IMR-90 (cell line): ENCODE measurements at regions of chr1 and their contacts with region 1.

Region 1: DNA sequence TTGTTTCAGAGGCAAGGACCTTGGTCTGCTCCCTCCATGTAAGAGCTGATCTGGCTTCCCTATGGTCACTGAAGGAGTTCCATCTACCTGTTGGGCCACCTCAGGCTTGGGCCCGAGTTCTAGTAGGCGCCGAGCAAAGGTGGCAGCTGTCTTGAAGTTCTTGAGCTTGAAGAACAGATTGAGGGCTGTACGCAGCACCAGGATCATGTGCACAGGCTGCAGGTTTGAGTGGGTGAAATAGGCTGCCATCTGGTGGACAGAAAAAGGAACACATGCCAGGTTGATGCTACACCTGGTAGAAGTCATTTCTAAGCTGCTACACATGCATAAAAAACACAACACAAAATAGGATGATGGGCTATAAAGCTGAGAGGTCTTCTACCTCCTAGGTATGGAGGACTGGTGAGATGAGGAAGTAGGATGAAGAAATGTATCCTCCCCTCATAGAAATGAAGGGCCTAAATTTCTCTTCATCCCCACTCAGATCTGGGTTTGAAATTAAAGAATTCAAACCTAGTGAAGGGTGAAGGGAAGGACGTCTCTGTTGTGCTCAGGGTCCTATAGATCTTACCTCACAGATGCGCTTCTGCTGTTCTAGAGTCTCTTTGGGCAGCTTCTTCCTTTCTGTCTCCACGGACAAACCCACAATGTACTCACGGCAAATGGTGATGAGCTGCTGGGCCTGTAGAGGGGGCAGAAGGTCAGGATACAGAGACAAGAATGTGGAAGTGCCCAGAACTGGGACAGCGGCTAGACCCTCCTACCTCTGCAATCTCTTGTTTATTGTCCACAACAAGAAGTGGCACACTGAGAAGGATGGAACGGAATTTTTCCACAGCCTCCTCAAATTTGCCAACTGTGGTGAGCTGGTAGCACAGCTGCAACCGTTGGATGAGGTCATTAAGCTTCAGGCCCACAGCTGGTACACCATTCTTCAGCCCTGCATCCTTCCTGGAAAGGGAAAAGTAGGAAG is 6.6 kb upstream of the PEX19 start:
- DNase-seq: peak; percentile 70
- ATAC-seq: peak; percentile 71
- H3K4me3 ChIP-seq: no peak overlapping the region
- H3K27ac ChIP-seq: no peak overlapping the region
- H3K4me1 ChIP-seq: no peaks in the 10 kb centered on the region
- H3K27me3 ChIP-seq: no peaks in the 10 kb centered on the region
- CTCF ChIP-seq: peak; percentile 66
- POLR2A ChIP-seq: no peak
- RAD21 ChIP-seq: peak; percentile 52

Region 2: GRCh38 chr1:160098852-160099561 is 192.5 kb before region 1 on chr1:
- CTCF ChIA-PET with region 1: interaction called, 3 read pairs
- POLR2A ChIA-PET with region 1: no interaction called
- dilution Hi-C with region 1: no loop called
- in situ Hi-C with region 1: no loop called
- intact Hi-C with region 1: loop called (anchors 1 kb)
- DNase-seq: peak; percentile 87
- ATAC-seq: peak; percentile 95
- H3K4me3 ChIP-seq: peak overlapping the region; percentile 64
- H3K27ac ChIP-seq: 0 out of 2 replicates have a peak overlapping the region, but pooled peaks have one; percentile 7
- H3K4me1 ChIP-seq: peaks cover 16% of the 10 kb centered on the region
- H3K27me3 ChIP-seq: no peaks in the 10 kb centered on the region; the same call in 1 of the 2 replicates
- CTCF ChIP-seq: no peak
- POLR2A ChIP-seq: no peak
- RAD21 ChIP-seq: no peak

Region 3: GRCh38 chr1:160226623-160227022 is 64.9 kb before region 1 on chr1:
- CTCF ChIA-PET with region 1: no interaction called
- POLR2A ChIA-PET with region 1: no interaction called
- dilution Hi-C with region 1: no loop called
- in situ Hi-C with region 1: no loop called
- intact Hi-C with region 1: loop called (anchors 5 kb)
- DNase-seq: no peak
- ATAC-seq: no peak
- H3K4me3 ChIP-seq: no peak overlapping the region
- H3K27ac ChIP-seq: no peak overlapping the region
- H3K4me1 ChIP-seq: no peaks in the 10 kb centered on the region
- H3K27me3 ChIP-seq: no peaks in the 10 kb centered on the region
- CTCF ChIP-seq: no peak
- POLR2A ChIP-seq: no peak
- RAD21 ChIP-seq: no peak

Region 4: DNA sequence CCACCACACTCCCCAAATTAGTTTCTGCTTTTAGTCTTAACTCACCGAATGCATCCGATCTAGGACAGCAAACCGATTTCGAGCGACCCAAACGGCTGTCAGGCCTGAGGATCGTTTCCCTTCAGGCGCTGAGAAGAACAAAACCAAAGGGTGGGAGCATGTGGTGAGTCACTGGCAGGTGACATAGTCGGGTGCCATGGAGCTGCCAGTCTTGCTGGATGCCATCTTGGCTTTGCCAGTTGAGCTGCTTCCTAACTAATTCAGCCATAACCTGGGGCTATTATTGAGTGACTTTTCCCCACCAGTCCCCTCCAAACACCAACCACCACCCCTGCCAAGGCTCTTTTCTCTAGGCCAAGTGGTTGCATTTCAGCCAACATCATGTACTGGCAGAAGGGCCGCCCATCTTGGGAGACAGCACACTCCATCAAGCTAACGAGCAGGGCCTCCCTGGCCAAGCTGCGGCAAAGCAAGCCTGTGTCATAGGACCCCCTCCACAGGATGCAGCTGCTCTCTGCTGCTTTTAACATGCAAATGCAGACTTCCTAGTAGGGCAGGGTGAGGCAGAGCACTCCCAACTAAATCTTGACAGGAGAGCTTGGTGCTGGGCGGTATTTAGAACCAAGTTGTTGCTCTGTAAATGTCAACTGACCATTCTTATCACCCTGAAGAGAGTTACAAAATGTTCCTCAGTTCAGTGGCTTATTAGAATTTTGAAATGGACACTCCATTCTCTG is 15.8 kb after region 1 on chr1:
- CTCF ChIA-PET with region 1: interaction called, 10 read pairs
- POLR2A ChIA-PET with region 1: no interaction called
- dilution Hi-C with region 1: no loop called
- in situ Hi-C with region 1: no loop called
- intact Hi-C with region 1: no loop called
- DNase-seq: no peak
- ATAC-seq: no peak
- H3K4me3 ChIP-seq: no peak overlapping the region
- H3K27ac ChIP-seq: no peak overlapping the region
- H3K4me1 ChIP-seq: no peaks in the 10 kb centered on the region
- H3K27me3 ChIP-seq: no peaks in the 10 kb centered on the region
- CTCF ChIP-seq: no peak
- POLR2A ChIP-seq: no peak
- RAD21 ChIP-seq: no peak

Region 5: GRCh38 chr1:160330129-160330528 is 38.6 kb after region 1 on chr1:
- CTCF ChIA-PET with region 1: no interaction called
- POLR2A ChIA-PET with region 1: no interaction called
- dilution Hi-C with region 1: no loop called
- in situ Hi-C with region 1: loop called (anchors 5 kb)
- intact Hi-C with region 1: loop called (anchors 5 kb)
- DNase-seq: no peak
- ATAC-seq: no peak
- H3K4me3 ChIP-seq: no peak overlapping the region
- H3K27ac ChIP-seq: no peak overlapping the region
- H3K4me1 ChIP-seq: no peaks in the 10 kb centered on the region
- H3K27me3 ChIP-seq: no peaks in the 10 kb centered on the region
- CTCF ChIP-seq: no peak
- POLR2A ChIP-seq: no peak
- RAD21 ChIP-seq: no peak